Activated T-helper 2 cell treated with anti-CD3 and anti-CD28 coated beads, Interferon-gamma antibody, Interleukin-2, Interleukin-4, amounts not matched to agents 10 μg/mL and 5 μg/mL and 100 μg/mL, durations not matched to agents 14 hours and 24 hours and 36 hours (primary cell): ENCODE measurements at regions of chr17 and their contacts with region 1.

Region 1: GRCh38 chr17:77645072-77646045 is 313.1 kb upstream of the TNRC6C start:
- DNase-seq: peak; percentile 71
- H3K4me3 Mint-ChIP-seq: peak overlapping the region; percentile 60
- H3K27ac Mint-ChIP-seq: peak overlapping the region; percentile 95
- H3K4me1 Mint-ChIP-seq: peaks cover 45% of the 10 kb centered on the region
- H3K27me3 Mint-ChIP-seq: no peaks in the 10 kb centered on the region

Region 2: GRCh38 chr17:77444984-77445759 is 200.2 kb before region 1 on chr17:
- intact Hi-C with region 1: loop called (anchors 5 kb)
- DNase-seq: peak; percentile 85
- H3K4me3 Mint-ChIP-seq: peak overlapping the region; percentile 77
- H3K27ac Mint-ChIP-seq: peak overlapping the region; percentile 99
- H3K4me1 Mint-ChIP-seq: peaks cover 84% of the 10 kb centered on the region
- H3K27me3 Mint-ChIP-seq: no peaks in the 10 kb centered on the region

Region 3: GRCh38 chr17:77542551-77543490 is 102.5 kb before region 1 on chr17:
- intact Hi-C with region 1: loop called (anchors 5 kb)
- DNase-seq: peak; percentile 49
- H3K4me3 Mint-ChIP-seq: no peak overlapping the region
- H3K27ac Mint-ChIP-seq: no peak overlapping the region
- H3K4me1 Mint-ChIP-seq: peaks cover 10% of the 10 kb centered on the region
- H3K27me3 Mint-ChIP-seq: peaks cover 12% of the 10 kb centered on the region

Region 4: DNA sequence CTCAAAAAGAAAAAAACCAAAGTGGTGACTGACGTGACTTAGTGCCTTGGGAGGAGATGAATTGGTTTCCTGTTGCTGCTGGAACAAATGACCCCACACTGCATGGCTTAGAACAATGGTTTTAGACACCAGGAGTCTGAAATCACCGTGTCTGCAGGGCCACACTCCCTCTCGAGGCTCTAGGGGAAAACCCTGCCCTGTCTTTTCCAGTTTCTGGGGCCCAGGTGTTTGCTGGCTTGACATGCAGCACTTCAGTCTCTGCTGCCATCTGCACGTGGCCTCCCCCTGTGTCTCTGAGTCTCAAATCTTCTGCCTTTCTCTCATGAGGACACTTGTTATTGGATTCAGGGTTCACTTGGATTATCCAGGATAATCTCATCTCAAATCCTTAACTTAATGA is 10.6 kb before region 1 on chr17:
- intact Hi-C with region 1: loop called (anchors 1 kb)
- DNase-seq: peak; percentile 35
- H3K4me3 Mint-ChIP-seq: no peak overlapping the region
- H3K27ac Mint-ChIP-seq: peak overlapping the region; percentile 57
- H3K4me1 Mint-ChIP-seq: peaks cover 24% of the 10 kb centered on the region
- H3K27me3 Mint-ChIP-seq: no peaks in the 10 kb centered on the region

Region 5: GRCh38 chr17:77842528-77843147 is 197.3 kb after region 1 on chr17:
- intact Hi-C with region 1: loop called (anchors 5 kb)
- DNase-seq: no peak
- H3K4me3 Mint-ChIP-seq: peak overlapping the region; percentile 2
- H3K27ac Mint-ChIP-seq: peak overlapping the region; percentile 76
- H3K4me1 Mint-ChIP-seq: peaks cover 44% of the 10 kb centered on the region
- H3K27me3 Mint-ChIP-seq: no peaks in the 10 kb centered on the region